ENCODE measurements at regions of chr10 and their contacts with region 1.

Region 1: DNA sequence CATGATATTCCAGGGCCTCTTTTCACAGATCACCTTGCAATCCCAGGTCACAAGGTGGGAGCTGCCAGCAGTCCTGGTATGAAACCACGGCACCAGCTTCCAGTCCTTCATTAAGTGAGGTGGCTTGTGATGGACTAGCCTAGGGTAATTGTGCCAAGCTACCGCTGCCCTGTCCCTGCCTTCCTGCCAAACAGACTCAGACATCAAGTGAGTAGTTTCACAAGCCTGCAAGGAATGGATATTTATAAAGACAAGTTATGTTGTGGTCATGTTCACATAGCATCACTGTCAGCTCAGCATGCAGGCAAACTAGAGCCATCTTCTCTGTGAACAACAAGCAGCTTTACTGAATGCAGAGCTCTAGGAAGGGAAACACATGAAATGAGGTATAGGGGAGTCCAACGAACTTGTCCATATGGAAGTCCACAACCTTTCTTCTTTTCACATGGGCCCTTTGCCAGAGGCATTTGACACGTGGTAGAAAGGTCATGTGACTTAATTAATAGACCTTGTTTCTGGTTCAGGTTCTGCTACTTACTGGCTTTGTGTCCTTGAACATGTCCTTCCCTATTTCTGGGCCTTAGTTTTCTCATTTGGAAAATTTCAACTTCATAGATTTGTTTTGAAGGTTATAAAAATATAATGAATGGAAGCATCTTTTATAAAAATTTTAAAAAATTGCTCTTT is 1061.2 kb downstream of the KCNMA1 start:
- DNase-seq: no peak
- H3K4me3 ChIP-seq: no peak overlapping the region
- H3K27ac ChIP-seq: no peak overlapping the region
- H3K4me1 ChIP-seq: no peaks in the 10 kb centered on the region
- H3K27me3 ChIP-seq: no peaks in the 10 kb centered on the region
- CTCF ChIP-seq: no peak
- POLR2A ChIP-seq: no peak

Region 2: GRCh38 chr10:77011874-77012811 is 435.7 kb after region 1 on chr10:
- intact Hi-C with region 1: loop called in 1 of 2 experiments (anchors 5 kb)
- DNase-seq: no peak
- H3K4me3 ChIP-seq: no peak overlapping the region
- H3K27ac ChIP-seq: peak overlapping the region in 1 of 5 donors; percentile 31
- H3K4me1 ChIP-seq: peaks cover 0 to 8% of the 10 kb centered on the region in 2 donors
- H3K27me3 ChIP-seq: no peaks in the 10 kb centered on the region
- CTCF ChIP-seq: no peak
- POLR2A ChIP-seq: no peak

Measured in adrenal gland (tissue), 19 donors.